Activated T-helper 1 cell treated with anti-CD3 and anti-CD28 coated beads, Interleukin-12 subunit alpha, Interleukin-12 subunit beta, Interleukin-2, Interleukin-4 antibody, amounts not matched to agents 30 ng/mL and 10 ng/mL and 1 ng/mL, durations not matched to agents 14 hours and 24 hours and 36 hours (primary cell): ENCODE measurements at regions of chr7 and their contacts with region 1.

Region 1: GRCh38 chr7:134954197-134955082 is 31.9 kb upstream of the AGBL3 start:
- DNase-seq: no peak
- H3K4me3 Mint-ChIP-seq: no peak overlapping the region
- H3K27ac Mint-ChIP-seq: no peak overlapping the region
- H3K4me1 Mint-ChIP-seq: no peaks in the 10 kb centered on the region
- H3K27me3 Mint-ChIP-seq: peaks cover 2% of the 10 kb centered on the region

Region 2: GRCh38 chr7:134432296-134433152 is 521.9 kb before region 1 on chr7:
- intact Hi-C with region 1: loop called (anchors 1 kb)
- DNase-seq: peak; percentile 61
- H3K4me3 Mint-ChIP-seq: peak overlapping the region; percentile 78
- H3K27ac Mint-ChIP-seq: peak overlapping the region; percentile 79
- H3K4me1 Mint-ChIP-seq: peaks cover 23% of the 10 kb centered on the region
- H3K27me3 Mint-ChIP-seq: peaks cover 3% of the 10 kb centered on the region

Region 3: GRCh38 chr7:134514663-134515062 is 439.8 kb before region 1 on chr7:
- intact Hi-C with region 1: loop called (anchors 1 kb)
- DNase-seq: no peak
- H3K4me3 Mint-ChIP-seq: no peak overlapping the region
- H3K27ac Mint-ChIP-seq: no peak overlapping the region
- H3K4me1 Mint-ChIP-seq: peaks cover 16% of the 10 kb centered on the region
- H3K27me3 Mint-ChIP-seq: peaks cover 12% of the 10 kb centered on the region

Region 4: GRCh38 chr7:134605973-134606923 is 348.2 kb before region 1 on chr7:
- intact Hi-C with region 1: loop called (anchors 2 kb)
- DNase-seq: peak; percentile 27
- H3K4me3 Mint-ChIP-seq: peak overlapping the region; percentile 67
- H3K27ac Mint-ChIP-seq: peak overlapping the region; percentile 27
- H3K4me1 Mint-ChIP-seq: peaks cover 11% of the 10 kb centered on the region
- H3K27me3 Mint-ChIP-seq: peaks cover 33% of the 10 kb centered on the region

Region 5: GRCh38 chr7:134632937-134633540 is 321.4 kb before region 1 on chr7:
- intact Hi-C with region 1: loop called (anchors 1 kb)
- DNase-seq: no peak
- H3K4me3 Mint-ChIP-seq: no peak overlapping the region
- H3K27ac Mint-ChIP-seq: no peak overlapping the region
- H3K4me1 Mint-ChIP-seq: peaks cover 20% of the 10 kb centered on the region
- H3K27me3 Mint-ChIP-seq: peaks cover 5% of the 10 kb centered on the region

Region 6: GRCh38 chr7:134690016-134690415 is 264.4 kb before region 1 on chr7:
- intact Hi-C with region 1: loop called (anchors 1 kb)
- DNase-seq: no peak
- H3K4me3 Mint-ChIP-seq: no peak overlapping the region
- H3K27ac Mint-ChIP-seq: no peak overlapping the region
- H3K4me1 Mint-ChIP-seq: peaks cover 6% of the 10 kb centered on the region
- H3K27me3 Mint-ChIP-seq: peaks cover 4% of the 10 kb centered on the region

Region 7: GRCh38 chr7:134724606-134725005 is 229.8 kb before region 1 on chr7:
- intact Hi-C with region 1: loop called (anchors 1 kb)
- DNase-seq: no peak
- H3K4me3 Mint-ChIP-seq: no peak overlapping the region
- H3K27ac Mint-ChIP-seq: no peak overlapping the region
- H3K4me1 Mint-ChIP-seq: no peaks in the 10 kb centered on the region
- H3K27me3 Mint-ChIP-seq: peaks cover 6% of the 10 kb centered on the region